Psoas muscle (tissue), 8 donors: ENCODE measurements at regions of chr20 and their contacts with region 1.

Region 1: DNA sequence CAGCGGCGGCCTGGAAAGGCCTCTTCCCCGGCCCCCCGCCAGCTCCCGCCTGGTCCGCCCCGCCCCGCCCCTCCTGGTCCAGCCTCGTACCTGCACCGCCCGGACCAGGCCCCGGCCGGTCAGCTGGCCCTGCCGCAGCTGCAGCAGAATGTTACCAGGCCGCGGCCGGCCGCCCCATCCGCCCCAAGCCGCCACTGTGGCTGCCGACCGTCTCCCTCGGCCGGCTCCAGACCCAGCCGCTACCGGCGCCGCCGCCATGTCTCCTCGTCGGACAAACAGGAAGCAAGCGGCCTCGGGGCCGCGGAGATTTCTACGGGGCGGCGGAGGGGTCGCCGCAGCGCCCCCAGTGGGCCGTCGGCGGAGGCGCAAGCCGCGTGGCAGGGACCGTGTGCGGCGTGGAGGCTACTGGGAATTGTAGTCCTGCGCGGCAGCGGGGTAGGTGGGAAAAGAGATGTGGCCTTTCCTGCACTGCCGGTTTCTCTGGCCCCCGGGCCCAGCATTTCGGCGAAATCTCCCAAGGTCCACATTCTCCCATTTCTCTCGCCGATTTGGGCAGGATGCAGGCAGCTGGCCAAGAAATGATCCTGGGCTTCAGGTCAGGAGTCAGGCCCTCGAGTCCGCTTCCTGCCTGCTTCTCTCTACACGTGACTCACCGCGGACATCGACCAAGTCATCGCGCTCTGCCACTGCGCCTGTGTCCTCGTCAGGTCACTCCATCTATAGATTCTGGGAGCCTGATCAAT is at the start of gene TRPC4AP:
- DNase-seq: peak; percentile 90 to 95
- ATAC-seq: peak; percentile 95 to 98 (median 96)
- H3K4me3 ChIP-seq: peak within 1 kb of the TSS; percentile 82
- H3K27ac ChIP-seq: peak within 1 kb of the TSS; percentile 96
- H3K4me1 ChIP-seq: peaks cover 38% of the 10 kb centered on the region
- H3K27me3 ChIP-seq: no peaks in the 10 kb centered on the region
- CTCF ChIP-seq: peak; percentile 90
- total RNA-seq, gene TRPC4AP: 36.0 to 62.3 (median 58.1) TPM

Region 2: DNA sequence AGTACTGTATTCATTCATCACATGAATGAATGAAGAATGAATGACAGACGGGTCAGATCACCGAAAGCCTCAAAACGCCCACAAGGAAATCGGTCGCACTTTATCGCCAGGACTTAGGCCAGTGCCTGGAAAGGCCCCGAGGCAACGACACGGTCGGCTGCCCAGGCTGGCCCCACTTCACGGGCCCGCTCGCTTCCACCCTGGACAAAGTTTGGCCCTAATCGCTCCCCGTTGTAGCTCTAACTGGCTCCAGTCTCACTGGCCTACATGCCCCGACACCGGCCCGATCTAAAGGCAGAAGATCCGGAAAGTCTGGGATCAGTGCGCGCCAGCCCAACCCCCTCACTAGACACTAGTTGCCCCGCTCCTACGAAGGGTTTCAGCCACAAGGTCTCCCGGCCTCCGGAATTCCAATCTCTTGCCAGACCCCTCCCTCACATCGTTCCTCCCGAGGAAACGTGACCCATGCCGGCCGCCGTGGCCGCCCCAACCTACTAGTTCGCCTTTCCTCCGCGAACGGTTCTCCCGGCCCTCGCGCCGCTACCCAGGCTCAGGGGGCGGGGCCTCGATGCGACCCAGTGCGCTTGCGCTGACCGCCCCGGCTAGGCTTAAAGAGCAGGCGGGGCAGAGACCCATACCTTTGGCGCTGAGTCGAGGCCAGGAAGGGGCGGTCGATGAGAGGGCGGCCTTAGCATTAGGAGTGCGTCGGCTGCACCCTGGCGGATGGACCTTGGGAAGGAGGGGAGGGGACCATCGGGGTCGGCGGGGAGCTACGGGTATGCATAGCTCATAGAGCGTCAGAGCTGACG is 137.3 kb before region 1 on chr20 and contains the starts of genes GSS and MYH7B:
- intact Hi-C with region 1: loop called in 1 of 2 experiments (anchors 5 kb)
- DNase-seq: peak; percentile 99
- ATAC-seq: peak; percentile 87 to 93 (median 92)
- H3K4me3 ChIP-seq: peak within 1 kb of the TSS; percentile 80
- H3K27ac ChIP-seq: peak within 1 kb of the TSS; percentile 96
- H3K4me1 ChIP-seq: peaks cover 24% of the 10 kb centered on the region
- H3K27me3 ChIP-seq: no peaks in the 10 kb centered on the region
- CTCF ChIP-seq: peak; percentile 46
- total RNA-seq, gene GSS: 21.5 to 36.6 (median 26.6) TPM
- total RNA-seq, gene MYH7B: 10.6 to 101 (median 22.1) TPM

Region 3: GRCh38 chr20:35207950-35208611 is 115.4 kb after region 1 on chr20:
- intact Hi-C with region 1: loop called (anchors 5 kb)
- DNase-seq: peak; percentile 78 to 84
- ATAC-seq: peak; percentile 80 to 99 (median 94)
- H3K4me3 ChIP-seq: peak overlapping the region; percentile 30
- H3K27ac ChIP-seq: peak overlapping the region; percentile 65
- H3K4me1 ChIP-seq: peaks cover 6% of the 10 kb centered on the region
- H3K27me3 ChIP-seq: no peaks in the 10 kb centered on the region
- CTCF ChIP-seq: peak; percentile 77

Region 4: DNA sequence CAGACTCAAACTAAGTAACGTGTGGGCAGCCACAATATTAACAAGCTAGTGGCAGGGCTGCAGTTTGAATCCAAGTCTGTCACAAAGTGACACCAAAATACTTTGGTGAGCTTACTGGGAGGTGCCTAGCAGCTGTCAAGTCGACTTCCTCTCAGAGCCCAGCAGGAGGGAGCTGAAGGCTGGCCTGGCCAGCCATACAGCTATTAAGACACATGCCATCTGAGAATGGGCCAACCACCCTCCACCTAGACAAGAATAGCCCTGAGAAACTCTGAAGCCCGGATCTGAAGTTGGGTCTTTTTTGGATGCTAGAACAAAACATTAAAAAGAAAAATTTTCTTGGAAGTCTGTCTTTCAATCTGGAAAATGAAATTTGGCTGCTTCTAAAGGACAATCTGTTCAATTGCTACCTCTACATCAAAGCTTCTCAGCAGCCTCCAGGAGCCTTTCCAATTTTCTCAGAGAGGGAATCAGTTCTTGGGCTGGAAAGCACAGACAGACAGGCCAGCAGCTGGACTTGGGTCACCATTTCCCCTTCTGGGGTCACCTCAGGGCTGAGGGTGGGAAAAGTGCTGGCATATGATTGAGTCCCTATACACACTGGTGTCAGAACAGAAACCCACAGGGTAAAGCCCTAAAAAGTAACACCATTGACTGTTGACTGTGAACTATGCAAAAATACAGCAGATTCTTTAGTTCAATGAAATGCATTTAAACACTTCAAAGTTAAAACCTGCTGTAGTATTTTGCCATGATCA is 276.1 kb after region 1 on chr20:
- intact Hi-C with region 1: no loop called
- DNase-seq: peak; percentile 54 to 79
- ATAC-seq: peak; percentile 98 to 99 (median 99)
- H3K4me3 ChIP-seq: peak overlapping the region; percentile 14
- H3K27ac ChIP-seq: peak overlapping the region; percentile 90
- H3K4me1 ChIP-seq: peaks cover 23% of the 10 kb centered on the region
- H3K27me3 ChIP-seq: no peaks in the 10 kb centered on the region
- CTCF ChIP-seq: no peak